ENCODE measurements at regions of chr1 and their contacts with region 1.

Region 1: GRCh38 chr1:89615676-89616598 is 17.0 kb upstream of the LRRC8C start:
- DNase-seq: no peak
- H3K4me3 ChIP-seq: no peak overlapping the region
- H3K4me3 Mint-ChIP-seq: no peak overlapping the region
- H3K27ac ChIP-seq: no peak overlapping the region
- H3K27ac Mint-ChIP-seq: peak overlapping the region in 6 of 7 donors; percentile 5 to 71 (median 44)
- H3K4me1 ChIP-seq: peaks cover 69% of the 10 kb centered on the region
- H3K4me1 Mint-ChIP-seq: peaks cover 51 to 92% (median 71%) of the 10 kb centered on the region in 4 donors
- H3K27me3 ChIP-seq: no peaks in the 10 kb centered on the region
- H3K27me3 Mint-ChIP-seq: no peaks in the 10 kb centered on the region

Region 2: DNA sequence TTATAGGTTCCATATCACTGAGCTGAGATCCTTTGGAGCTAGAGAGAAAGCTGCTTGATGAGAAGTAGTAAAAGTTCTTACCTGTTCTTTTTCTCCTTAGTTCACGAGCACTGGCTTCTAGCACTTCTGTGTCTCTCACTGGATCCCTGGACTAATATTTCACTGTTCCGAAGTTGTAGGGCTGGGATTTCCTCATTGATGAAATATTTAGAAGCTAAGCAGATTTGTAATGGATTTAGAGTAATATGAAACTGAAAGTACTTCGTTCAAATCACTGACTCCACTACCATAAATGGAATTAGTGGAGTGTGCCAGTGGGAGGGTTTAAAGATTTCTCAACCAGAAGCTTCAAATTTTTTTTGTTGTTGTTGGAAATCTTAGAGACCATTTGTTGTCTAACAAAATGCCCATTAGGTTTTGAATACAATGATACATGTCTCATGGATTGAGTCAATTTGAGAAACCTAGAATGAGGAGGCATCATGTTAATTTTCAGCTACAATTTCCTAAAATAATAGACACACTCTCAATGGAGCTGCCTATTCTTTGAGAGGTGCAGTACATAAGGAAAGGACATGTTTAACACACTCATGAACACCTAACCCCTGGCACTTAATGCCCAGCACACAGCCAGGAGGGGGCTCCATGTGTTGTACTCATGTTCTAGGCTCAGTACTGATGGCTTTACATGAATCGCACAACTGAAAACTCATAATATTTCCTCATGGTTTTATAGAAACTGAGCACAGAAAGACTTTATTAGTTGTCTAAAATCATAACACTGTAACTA is 550.7 kb before region 1 on chr1 and contains the start of gene GBP1:
- CTCF ChIA-PET with region 1: no interaction called
- POLR2A ChIA-PET with region 1: interaction called, 3 read pairs
- intact Hi-C with region 1: loop called (anchors 5 kb)
- DNase-seq: peak; percentile 51 to 57 (median 53)
- H3K4me3 ChIP-seq: peak within 1 kb of the TSS; percentile 65 to 74
- H3K4me3 Mint-ChIP-seq: peak within 1 kb of the TSS; percentile 90 to 100 (median 98)
- H3K27ac ChIP-seq: peak within 1 kb of the TSS; percentile 85
- H3K27ac Mint-ChIP-seq: peak within 1 kb of the TSS; percentile 94 to 100 (median 96)
- H3K4me1 ChIP-seq: peaks cover 56% of the 10 kb centered on the region
- H3K4me1 Mint-ChIP-seq: peaks cover 37 to 70% (median 51%) of the 10 kb centered on the region in 4 donors
- H3K27me3 ChIP-seq: no peaks in the 10 kb centered on the region
- H3K27me3 Mint-ChIP-seq: no peaks in the 10 kb centered on the region
- total RNA-seq, gene GBP1: 74.1 to 74.2 TPM

Region 3: DNA sequence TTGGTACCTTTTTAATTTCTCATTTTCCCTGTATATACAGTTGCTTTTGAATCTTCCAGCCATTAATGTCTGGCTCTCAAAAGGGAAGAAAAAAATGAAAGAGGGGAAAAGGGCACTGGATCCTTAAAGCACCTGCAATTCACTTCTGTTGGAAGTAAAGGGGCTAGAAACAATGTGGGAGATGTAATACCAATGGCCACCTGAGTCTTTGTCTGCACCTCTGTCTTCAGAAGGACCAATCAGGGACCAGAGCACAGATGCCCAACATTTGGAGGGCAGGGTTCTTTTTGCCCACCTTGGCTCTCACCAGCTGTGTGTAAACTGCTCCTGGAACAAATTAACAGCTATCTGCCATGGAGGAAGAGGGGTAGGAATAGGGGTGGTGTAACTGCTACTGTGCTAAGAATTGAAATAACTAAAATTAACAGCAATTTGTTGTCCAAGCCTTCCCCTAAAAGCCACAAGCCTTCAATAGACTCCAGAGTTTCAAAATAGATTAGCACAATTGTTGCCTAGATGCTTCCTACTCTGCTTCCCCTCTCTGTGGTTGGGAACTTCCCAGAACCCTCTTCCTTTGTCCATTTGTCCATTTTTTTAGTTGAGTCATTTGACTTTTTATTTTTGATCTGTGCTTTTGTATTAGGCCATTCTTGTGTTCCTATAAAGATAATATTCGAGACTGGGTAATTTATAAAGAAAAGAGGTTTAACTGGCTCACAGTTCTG is 102.8 kb before region 1 on chr1:
- CTCF ChIA-PET with region 1: no interaction called
- POLR2A ChIA-PET with region 1: no interaction called
- intact Hi-C with region 1: no loop called
- DNase-seq: no peak
- H3K4me3 ChIP-seq: no peak overlapping the region
- H3K4me3 Mint-ChIP-seq: no peak overlapping the region
- H3K27ac ChIP-seq: no peak overlapping the region
- H3K27ac Mint-ChIP-seq: no peak overlapping the region
- H3K4me1 ChIP-seq: no peaks in the 10 kb centered on the region
- H3K4me1 Mint-ChIP-seq: no peaks in the 10 kb centered on the region
- H3K27me3 ChIP-seq: no peaks in the 10 kb centered on the region
- H3K27me3 Mint-ChIP-seq: peaks cover 5 to 8% of the 10 kb centered on the region in 2 donors

Region 4: DNA sequence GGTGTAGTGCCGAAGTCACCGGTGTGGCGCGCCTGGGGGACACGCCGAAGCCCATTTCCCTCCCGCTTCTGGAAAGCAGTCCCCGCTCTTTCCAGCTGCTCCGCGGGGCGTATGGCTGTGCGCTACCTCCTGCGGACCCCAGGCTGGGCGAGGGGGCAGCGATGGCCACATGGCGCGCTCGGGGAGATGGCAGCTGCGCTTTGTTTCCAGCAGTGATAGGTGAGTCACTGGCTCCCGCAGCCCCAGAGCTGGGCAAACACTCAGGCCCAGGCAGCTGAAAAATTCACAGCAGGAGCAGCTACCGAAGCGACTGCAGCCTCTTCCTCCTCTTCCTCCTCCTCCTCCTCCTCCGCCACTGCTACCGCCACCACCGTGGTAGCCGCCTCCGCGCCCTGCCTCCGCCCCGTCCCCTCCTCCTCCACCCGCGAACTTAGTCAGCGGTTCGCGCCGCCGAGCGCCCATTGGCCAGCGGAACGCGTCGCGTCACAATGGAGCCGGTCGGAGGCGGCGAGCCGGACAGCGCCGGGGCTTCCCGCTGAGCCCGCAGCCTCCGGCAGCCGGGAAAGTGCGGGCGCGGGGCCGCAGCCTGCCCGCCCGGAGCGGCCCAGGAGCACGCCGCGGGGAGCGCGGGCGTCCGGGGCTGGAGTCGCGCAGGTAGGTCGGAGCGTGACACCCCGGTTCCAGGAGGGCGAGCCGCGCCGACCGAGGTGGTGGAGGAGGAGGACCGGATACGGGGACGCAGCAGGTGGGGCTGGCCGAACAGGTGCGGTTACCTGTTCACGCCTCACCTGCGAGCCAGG is 91.4 kb before region 1 on chr1 and contains the start of gene LRRC8B:
- CTCF ChIA-PET with region 1: interaction called, 6 read pairs
- POLR2A ChIA-PET with region 1: interaction called, 73 read pairs
- intact Hi-C with region 1: no loop called
- DNase-seq: peak; percentile 85 to 90 (median 88)
- H3K4me3 ChIP-seq: peak within 1 kb of the TSS; percentile 91 to 93
- H3K4me3 Mint-ChIP-seq: peak within 1 kb of the TSS in 5 of 8 donors; percentile 82 to 97 (median 87)
- H3K27ac ChIP-seq: peak within 1 kb of the TSS; percentile 92
- H3K27ac Mint-ChIP-seq: peak within 1 kb of the TSS in 6 of 7 donors; percentile 91 to 98 (median 96)
- H3K4me1 ChIP-seq: peaks cover 50% of the 10 kb centered on the region
- H3K4me1 Mint-ChIP-seq: peaks cover 11 to 21% (median 14%) of the 10 kb centered on the region in 4 donors
- H3K27me3 ChIP-seq: no peaks in the 10 kb centered on the region
- H3K27me3 Mint-ChIP-seq: no peaks in the 10 kb centered on the region
- total RNA-seq, gene LRRC8B: 15.6 to 18.1 TPM

Region 5: DNA sequence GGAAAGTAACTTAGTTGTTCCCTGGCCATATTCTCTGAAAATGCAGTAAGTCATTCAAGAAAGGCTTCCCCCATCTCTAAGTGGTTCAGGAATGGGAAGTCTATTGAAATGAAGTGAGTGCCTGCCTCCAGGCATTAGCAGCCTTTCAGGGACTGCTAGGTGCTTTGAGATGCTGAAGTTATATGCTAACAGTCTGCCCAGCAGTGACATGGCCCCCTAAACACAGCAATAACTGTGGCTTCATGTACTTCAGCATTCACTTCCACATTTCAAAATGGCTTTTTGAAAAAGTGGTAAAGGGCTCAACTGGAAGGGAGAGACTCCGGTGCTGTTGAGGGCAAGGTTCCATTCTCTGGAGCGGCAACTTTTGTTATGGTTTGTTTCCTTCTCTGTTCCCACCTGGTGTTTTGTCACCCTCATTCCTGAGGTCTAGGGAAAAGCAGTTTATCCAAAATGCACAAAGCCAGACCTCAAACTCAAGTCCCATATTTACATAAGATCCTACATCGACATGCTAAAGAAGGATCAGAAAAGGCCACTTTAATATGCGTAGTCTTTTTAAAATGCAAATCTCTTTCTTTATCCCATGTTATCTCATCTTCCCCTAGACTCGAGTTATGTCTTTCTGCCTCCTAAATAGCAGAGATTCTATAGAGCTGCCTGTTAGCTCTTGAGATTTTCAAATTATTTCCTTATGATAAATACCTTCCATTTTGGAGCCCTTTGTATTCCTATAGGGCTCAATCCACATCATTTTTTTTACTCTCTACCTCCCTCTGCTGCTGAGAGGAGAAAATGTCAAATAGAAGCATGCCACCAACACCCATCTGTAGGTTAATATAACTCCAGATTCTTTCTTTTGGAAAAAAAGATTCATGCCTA is 17.2 kb before region 1 on chr1:
- CTCF ChIA-PET with region 1: interaction called, 688 read pairs
- POLR2A ChIA-PET with region 1: interaction called, 813 read pairs
- intact Hi-C with region 1: no loop called
- DNase-seq: peak in 4 of 5 donors; percentile 32 to 49 (median 38)
- H3K4me3 ChIP-seq: no peak overlapping the region
- H3K4me3 Mint-ChIP-seq: peak overlapping the region in 5 of 8 donors; percentile 37 to 79 (median 45)
- H3K27ac ChIP-seq: no peak overlapping the region
- H3K27ac Mint-ChIP-seq: peak overlapping the region; percentile 19 to 81 (median 71)
- H3K4me1 ChIP-seq: peaks cover 64% of the 10 kb centered on the region
- H3K4me1 Mint-ChIP-seq: peaks cover 55 to 82% (median 74%) of the 10 kb centered on the region in 4 donors
- H3K27me3 ChIP-seq: no peaks in the 10 kb centered on the region
- H3K27me3 Mint-ChIP-seq: no peaks in the 10 kb centered on the region

Region 6: GRCh38 chr1:89657886-89658285 is 41.9 kb after region 1 on chr1:
- CTCF ChIA-PET with region 1: interaction called, 3 read pairs
- POLR2A ChIA-PET with region 1: interaction called, 102 read pairs
- intact Hi-C with region 1: no loop called
- DNase-seq: peak; percentile 74 to 86 (median 76)
- H3K4me3 ChIP-seq: no peak overlapping the region
- H3K4me3 Mint-ChIP-seq: peak overlapping the region; percentile 34 to 78 (median 70)
- H3K27ac ChIP-seq: peak overlapping the region; percentile 57
- H3K27ac Mint-ChIP-seq: peak overlapping the region; percentile 86 to 97 (median 92)
- H3K4me1 ChIP-seq: peaks cover 97% of the 10 kb centered on the region
- H3K4me1 Mint-ChIP-seq: peaks cover 71 to 96% (median 85%) of the 10 kb centered on the region in 4 donors
- H3K27me3 ChIP-seq: no peaks in the 10 kb centered on the region
- H3K27me3 Mint-ChIP-seq: no peaks in the 10 kb centered on the region

Region 7: GRCh38 chr1:89757532-89757931 is 141.6 kb after region 1 on chr1:
- CTCF ChIA-PET with region 1: interaction called, 629 read pairs
- POLR2A ChIA-PET with region 1: interaction called, 90 read pairs
- intact Hi-C with region 1: no loop called
- DNase-seq: peak; percentile 30 to 57 (median 42)
- H3K4me3 ChIP-seq: peak overlapping the region; percentile 31 to 38
- H3K4me3 Mint-ChIP-seq: peak overlapping the region; percentile 78 to 90 (median 85)
- H3K27ac ChIP-seq: peak overlapping the region; percentile 56
- H3K27ac Mint-ChIP-seq: peak overlapping the region; percentile 79 to 97 (median 92)
- H3K4me1 ChIP-seq: peaks cover 92% of the 10 kb centered on the region
- H3K4me1 Mint-ChIP-seq: peaks cover 64 to 92% (median 78%) of the 10 kb centered on the region in 4 donors
- H3K27me3 ChIP-seq: no peaks in the 10 kb centered on the region
- H3K27me3 Mint-ChIP-seq: no peaks in the 10 kb centered on the region

Region 8: DNA sequence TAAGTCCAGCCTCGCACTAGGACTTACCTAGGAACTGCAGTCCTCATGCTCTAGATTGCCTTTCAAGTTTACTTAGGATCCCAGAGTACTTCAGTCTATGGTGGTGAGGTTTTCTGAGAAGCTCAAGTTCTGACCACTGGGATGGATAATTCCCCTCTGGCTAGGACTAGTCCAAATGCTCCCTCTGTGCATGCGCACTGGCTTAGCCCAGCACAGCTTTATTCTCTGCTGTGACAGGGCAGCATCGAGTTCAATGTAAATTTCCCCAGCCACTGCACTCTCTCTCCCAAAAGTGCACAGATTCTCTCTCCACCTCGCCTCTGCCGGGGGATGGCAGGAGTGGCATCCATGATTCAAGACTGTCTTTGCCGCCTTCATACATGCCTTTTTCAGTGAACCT is 620.6 kb after region 1 on chr1:
- CTCF ChIA-PET with region 1: no interaction called
- POLR2A ChIA-PET with region 1: no interaction called
- intact Hi-C with region 1: no loop called
- DNase-seq: no peak
- H3K4me3 ChIP-seq: no peak overlapping the region
- H3K4me3 Mint-ChIP-seq: no peak overlapping the region
- H3K27ac ChIP-seq: no peak overlapping the region
- H3K27ac Mint-ChIP-seq: no peak overlapping the region
- H3K4me1 ChIP-seq: no peaks in the 10 kb centered on the region
- H3K4me1 Mint-ChIP-seq: no peaks in the 10 kb centered on the region
- H3K27me3 ChIP-seq: no peaks in the 10 kb centered on the region
- H3K27me3 Mint-ChIP-seq: no peaks in the 10 kb centered on the region